ENCODE measurements at regions of chr22 and their contacts with region 1.

Region 1: DNA sequence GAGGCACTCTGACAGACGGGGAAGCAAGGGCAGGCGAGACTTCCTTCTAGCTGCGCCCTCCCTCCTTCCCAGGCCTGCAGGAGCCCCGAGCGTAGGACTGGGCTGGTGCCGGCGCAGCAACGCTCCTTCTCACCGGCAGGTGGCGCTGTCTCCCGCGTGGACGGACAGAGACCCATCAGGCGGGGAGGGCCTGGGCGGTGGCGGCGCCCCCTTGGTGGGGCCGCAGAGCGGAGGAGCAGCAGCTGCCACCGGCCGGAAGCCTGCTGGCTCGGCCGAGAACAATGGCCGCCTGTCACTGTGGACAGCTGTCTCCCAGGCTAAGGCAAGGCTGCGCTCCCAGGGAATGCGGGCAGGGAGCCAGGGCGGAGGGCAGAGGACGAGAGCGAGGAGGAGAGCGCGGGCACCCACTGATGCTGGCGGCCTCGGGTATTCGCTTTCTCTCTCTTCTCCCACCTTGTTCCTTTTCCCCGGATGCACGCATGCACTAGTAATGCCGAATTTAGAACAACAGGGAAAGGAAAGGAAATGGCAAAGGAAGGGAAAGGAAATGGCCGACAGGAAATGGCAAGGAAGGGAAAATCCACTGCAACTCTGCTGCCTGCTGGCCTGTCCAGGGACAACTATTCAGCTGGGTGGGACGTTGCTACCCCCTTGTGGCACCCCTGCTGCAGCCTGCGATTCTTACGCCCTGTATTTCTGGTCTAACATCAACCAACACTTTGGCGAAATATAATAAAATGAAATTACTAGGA is 14.4 kb downstream of the PPM1F start:
- H3K4me3 ChIP-seq: peak overlapping the region; percentile 51
- H3K27ac ChIP-seq: peak overlapping the region; percentile 42
- H3K4me1 ChIP-seq: no peaks in the 10 kb centered on the region
- CTCF ChIP-seq: peak; percentile 99

Region 2: DNA sequence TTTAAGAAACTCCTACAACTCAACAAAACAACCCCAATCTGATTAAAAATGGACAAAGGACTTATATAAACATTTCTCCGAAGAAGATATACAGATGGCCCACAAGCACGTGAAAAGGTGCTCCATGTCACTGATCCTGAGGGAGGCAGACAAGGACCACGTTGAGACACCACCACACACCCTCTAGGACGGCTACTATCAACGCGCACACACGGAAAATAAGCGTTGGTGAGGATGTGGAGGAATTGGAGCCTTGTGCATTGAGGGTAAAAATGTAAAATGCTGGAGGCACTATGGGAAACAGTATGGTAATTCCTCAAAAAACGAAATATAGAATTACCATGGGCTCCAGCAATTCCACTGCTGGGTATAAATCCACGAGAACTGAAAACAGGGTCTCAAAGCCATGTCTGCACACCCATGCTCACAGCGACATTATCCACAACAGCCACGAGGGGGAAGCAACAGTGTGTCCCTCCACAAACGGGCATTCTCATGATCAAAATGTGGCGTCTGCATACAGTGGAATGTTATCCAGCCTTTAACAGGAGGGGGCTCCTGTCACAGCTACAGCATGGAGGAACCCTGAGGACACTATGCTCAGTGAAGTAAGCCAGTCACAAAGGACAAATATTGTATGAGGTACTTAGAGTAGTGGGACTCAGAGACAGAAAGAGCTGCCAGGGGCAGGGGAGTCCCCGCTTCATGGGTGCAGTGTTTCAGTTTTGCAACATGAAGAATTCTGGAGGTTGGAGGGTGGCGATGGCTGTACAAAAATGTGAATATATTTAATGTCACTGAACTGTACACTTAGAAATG is 225.1 kb before region 1 on chr22:
- CTCF ChIA-PET with region 1: interaction called, 28 read pairs
- POLR2A ChIA-PET with region 1: no interaction called
- H3K4me3 ChIP-seq: no peak overlapping the region
- H3K27ac ChIP-seq: no peak overlapping the region
- H3K4me1 ChIP-seq: no peaks in the 10 kb centered on the region
- CTCF ChIP-seq: peak; percentile 91

Region 3: DNA sequence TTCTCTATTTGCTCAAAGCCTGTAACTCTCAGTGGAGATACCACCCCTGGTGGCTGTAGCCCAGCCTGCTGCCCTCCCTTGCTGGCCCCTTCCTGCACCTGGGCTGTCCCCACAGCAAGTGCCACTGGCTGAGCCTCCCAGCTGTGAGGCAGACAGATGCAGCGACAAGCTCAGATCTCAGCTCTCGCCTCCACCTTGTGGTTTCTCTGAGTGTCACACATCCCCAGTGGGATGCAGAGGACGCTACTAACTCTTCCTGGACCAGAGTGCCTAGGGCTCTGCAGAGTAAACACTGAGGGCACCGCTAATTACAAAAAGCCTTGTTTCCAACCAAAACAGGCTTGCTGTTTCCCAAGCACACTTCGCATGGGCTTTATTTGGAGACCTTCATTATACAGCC is 211.6 kb before region 1 on chr22:
- CTCF ChIA-PET with region 1: interaction called, 22 read pairs
- POLR2A ChIA-PET with region 1: interaction called, 3 read pairs
- H3K4me3 ChIP-seq: no peak overlapping the region
- H3K27ac ChIP-seq: no peak overlapping the region
- H3K4me1 ChIP-seq: no peaks in the 10 kb centered on the region
- CTCF ChIP-seq: peak; percentile 63

Region 4: DNA sequence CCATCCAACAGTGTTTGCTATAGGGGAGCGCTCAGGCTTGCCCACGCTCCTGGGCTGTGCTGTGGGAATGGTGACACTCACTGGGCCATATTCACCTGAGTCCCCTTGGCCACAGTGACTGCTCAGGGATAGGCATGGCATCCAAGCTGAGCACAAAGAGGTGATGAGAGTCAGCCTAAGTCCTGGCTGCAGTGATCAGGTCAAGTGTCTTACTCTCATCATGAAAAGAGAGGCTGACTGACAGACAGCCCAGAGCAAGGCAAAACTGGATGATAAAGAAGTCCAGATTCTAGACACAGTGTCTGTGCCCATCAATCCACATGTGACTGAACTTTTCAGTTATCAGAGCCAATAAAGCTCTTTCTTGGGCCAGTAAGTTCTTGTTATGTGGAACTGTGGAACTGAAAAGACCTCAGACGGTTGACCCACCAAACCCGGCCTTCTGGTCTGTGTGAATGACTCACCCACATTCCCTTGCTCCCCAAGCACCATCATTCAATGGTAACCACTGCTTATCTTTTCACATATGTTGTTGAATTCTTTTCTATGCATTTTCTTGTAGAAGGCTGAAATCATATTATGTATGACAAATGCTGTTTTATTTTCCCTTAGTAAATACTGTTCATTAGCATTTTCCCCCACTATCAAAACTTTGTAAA is 159.4 kb before region 1 on chr22:
- CTCF ChIA-PET with region 1: interaction called, 10 read pairs
- POLR2A ChIA-PET with region 1: no interaction called
- H3K4me3 ChIP-seq: no peak overlapping the region
- H3K27ac ChIP-seq: no peak overlapping the region
- H3K4me1 ChIP-seq: no peaks in the 10 kb centered on the region
- CTCF ChIP-seq: no peak

Region 5: GRCh38 chr22:21952586-21953571 is 14.6 kb after region 1 on chr22 and contains the start of gene PPM1F:
- CTCF ChIA-PET with region 1: interaction called, 120 read pairs
- POLR2A ChIA-PET with region 1: interaction called, 6 read pairs
- H3K4me3 ChIP-seq: peak within 1 kb of the TSS; percentile 64
- H3K27ac ChIP-seq: no peak within 1 kb of the TSS
- H3K4me1 ChIP-seq: no peaks in the 10 kb centered on the region
- CTCF ChIP-seq: peak; percentile 62

Measured in HEK293 (cell line).